Transverse colon (tissue), 4 donors: ENCODE measurements at regions of chr1 and their contacts with region 1.

Region 1: GRCh38 chr1:187121661-187122060 is 292.9 kb downstream of the PLA2G4A start:
- DNase-seq: no peak
- H3K4me3 ChIP-seq: no peak overlapping the region
- H3K27ac ChIP-seq: no peak overlapping the region
- H3K4me1 ChIP-seq: no peaks in the 10 kb centered on the region
- H3K27me3 ChIP-seq: no peaks in the 10 kb centered on the region
- CTCF ChIP-seq: no peak
- EP300 ChIP-seq: no peak
- POLR2A ChIP-seq: no peak

Region 2: DNA sequence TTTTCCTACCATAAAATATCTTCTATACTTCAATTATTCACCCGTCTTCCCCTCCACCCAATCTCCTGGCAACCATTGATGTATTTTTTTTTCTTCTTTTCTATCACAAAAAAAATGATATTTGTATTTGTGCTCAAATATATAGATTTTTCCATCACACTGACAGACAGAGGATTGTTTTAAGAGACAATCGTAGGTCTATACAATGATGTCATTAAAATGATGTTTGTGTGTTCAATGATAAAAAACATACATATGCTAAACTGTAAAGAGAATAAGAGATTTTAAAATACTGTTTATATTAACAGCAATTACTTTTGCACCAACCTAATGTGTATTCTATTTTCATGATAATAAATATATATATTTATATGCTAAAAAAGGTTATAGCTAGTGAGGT is 47.2 kb after region 1 on chr1:
- in situ Hi-C with region 1: no loop called
- intact Hi-C with region 1: loop called (anchors 2 kb)
- DNase-seq: no peak
- H3K4me3 ChIP-seq: no peak overlapping the region
- H3K27ac ChIP-seq: no peak overlapping the region
- H3K4me1 ChIP-seq: no peaks in the 10 kb centered on the region
- H3K27me3 ChIP-seq: no peaks in the 10 kb centered on the region
- CTCF ChIP-seq: no peak
- EP300 ChIP-seq: no peak
- POLR2A ChIP-seq: no peak

Region 3: GRCh38 chr1:187928288-187928687 is 806.6 kb after region 1 on chr1:
- in situ Hi-C with region 1: no loop called
- intact Hi-C with region 1: no loop called
- DNase-seq: no peak
- H3K4me3 ChIP-seq: no peak overlapping the region
- H3K27ac ChIP-seq: no peak overlapping the region
- H3K4me1 ChIP-seq: no peaks in the 10 kb centered on the region
- H3K27me3 ChIP-seq: no peaks in the 10 kb centered on the region
- CTCF ChIP-seq: no peak
- EP300 ChIP-seq: no peak
- POLR2A ChIP-seq: no peak